Activated naive CD4-positive, alpha-beta T cell treated with anti-CD3 and anti-CD28 coated beads for 36 hours (primary cell): ENCODE measurements at regions of chr9 and their contacts with region 1.

Region 1: GRCh38 chr9:98807070-98807810 is at the start of gene GALNT12:
- DNase-seq: peak; percentile 56
- H3K4me3 Mint-ChIP-seq: peak within 1 kb of the TSS; percentile 82
- H3K27ac Mint-ChIP-seq: no peak within 1 kb of the TSS
- H3K4me1 Mint-ChIP-seq: peaks cover 42% of the 10 kb centered on the region
- H3K27me3 Mint-ChIP-seq: no peaks in the 10 kb centered on the region
- total RNA-seq, gene GALNT12: 12.9 to 13.5 TPM

Region 2: GRCh38 chr9:98796364-98797101 is 10.7 kb before region 1 on chr9 and contains the start of gene ANKS6:
- CTCF ChIA-PET with region 1: interaction called, 31 read pairs
- intact Hi-C with region 1: loop called (anchors 1 kb)
- DNase-seq: peak; percentile 81
- H3K4me3 Mint-ChIP-seq: peak within 1 kb of the TSS; percentile 77
- H3K27ac Mint-ChIP-seq: peak within 1 kb of the TSS; percentile 56
- H3K4me1 Mint-ChIP-seq: peaks cover 30% of the 10 kb centered on the region
- H3K27me3 Mint-ChIP-seq: no peaks in the 10 kb centered on the region
- total RNA-seq, gene ANKS6: 14.6 to 15.0 TPM

Region 3: GRCh38 chr9:98974994-98975712 is 167.9 kb after region 1 on chr9:
- CTCF ChIA-PET with region 1: interaction called, 4 read pairs
- intact Hi-C with region 1: loop called (anchors 1 kb)
- DNase-seq: peak; percentile 88
- H3K4me3 Mint-ChIP-seq: peak overlapping the region; percentile 7
- H3K27ac Mint-ChIP-seq: no peak overlapping the region
- H3K4me1 Mint-ChIP-seq: no peaks in the 10 kb centered on the region
- H3K27me3 Mint-ChIP-seq: peaks cover 5% of the 10 kb centered on the region

Region 4: GRCh38 chr9:99130069-99130468 is 322.8 kb after region 1 on chr9:
- CTCF ChIA-PET with region 1: no interaction called
- intact Hi-C with region 1: loop called (anchors 5 kb)
- DNase-seq: peak; percentile 20
- H3K4me3 Mint-ChIP-seq: no peak overlapping the region
- H3K27ac Mint-ChIP-seq: peak overlapping the region; percentile 54
- H3K4me1 Mint-ChIP-seq: peaks cover 73% of the 10 kb centered on the region
- H3K27me3 Mint-ChIP-seq: no peaks in the 10 kb centered on the region